HepG2 (cell line): ENCODE measurements at regions of chr7 and their contacts with region 1.

Region 1: GRCh38 chr7:122886357-122887081 is at the start of gene CADPS2:
- DNase-seq: peak; percentile 86
- ATAC-seq: peak; percentile 85
- H3K4me3 ChIP-seq: peak within 1 kb of the TSS; percentile 81 to 98 (median 92)
- H3K27ac ChIP-seq: peak within 1 kb of the TSS; percentile 89
- H3K4me1 ChIP-seq: peaks cover 46% of the 10 kb centered on the region
- H3K27me3 ChIP-seq: no peaks in the 10 kb centered on the region; a peak in 1 of 5 replicates
- CTCF ChIP-seq: no peak; the same call in 1 of the 2 replicates
- EP300 ChIP-seq: no peak
- POLR2A ChIP-seq: peak; percentile 49 to 69
- RAD21 ChIP-seq: peak; percentile 35
- total RNA-seq, gene CADPS2: 43.8 and 62.9 TPM in 2 replicates

Region 2: DNA sequence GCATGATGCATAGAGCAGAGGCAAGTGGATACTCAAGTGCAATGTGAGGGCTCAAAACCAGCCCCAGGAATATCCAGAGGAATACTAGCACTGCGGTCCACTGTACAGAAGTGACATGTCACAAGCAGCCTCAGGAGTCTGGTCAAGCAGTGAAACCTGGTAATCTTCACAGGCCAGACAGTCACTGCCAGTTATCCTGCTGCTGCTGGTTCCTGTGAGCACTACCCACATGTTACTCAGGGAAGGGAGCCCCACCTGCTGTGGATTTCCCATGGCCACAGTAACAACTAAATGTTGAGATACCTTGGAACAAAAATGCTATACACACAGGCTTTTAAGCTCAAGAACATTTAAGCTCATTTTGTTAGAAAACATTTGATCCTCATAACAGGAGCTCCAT is 290.6 kb before region 1 on chr7:
- CTCF ChIA-PET with region 1: no interaction called
- POLR2A ChIA-PET with region 1: no interaction called
- in situ Hi-C with region 1: no loop called
- intact Hi-C with region 1: no loop called
- DNase-seq: no peak
- ATAC-seq: no peak
- H3K4me3 ChIP-seq: no peak overlapping the region
- H3K27ac ChIP-seq: no peak overlapping the region
- H3K4me1 ChIP-seq: peaks cover 10% of the 10 kb centered on the region
- H3K27me3 ChIP-seq: no peaks in the 10 kb centered on the region
- CTCF ChIP-seq: no peak
- EP300 ChIP-seq: no peak
- POLR2A ChIP-seq: no peak
- RAD21 ChIP-seq: no peak

Region 3: GRCh38 chr7:122679813-122680212 is 206.7 kb before region 1 on chr7:
- CTCF ChIA-PET with region 1: no interaction called
- POLR2A ChIA-PET with region 1: interaction called, 5 read pairs
- in situ Hi-C with region 1: no loop called
- intact Hi-C with region 1: loop called (anchors 1 kb)
- DNase-seq: no peak
- ATAC-seq: peak; percentile 79
- H3K4me3 ChIP-seq: peak overlapping the region; percentile 23 to 50 (median 24); a peak in 4 of 6 replicates
- H3K27ac ChIP-seq: peak overlapping the region; percentile 95
- H3K4me1 ChIP-seq: peaks cover 49% of the 10 kb centered on the region
- H3K27me3 ChIP-seq: no peaks in the 10 kb centered on the region
- CTCF ChIP-seq: no peak
- EP300 ChIP-seq: no peak
- POLR2A ChIP-seq: no peak
- RAD21 ChIP-seq: no peak

Region 4: DNA sequence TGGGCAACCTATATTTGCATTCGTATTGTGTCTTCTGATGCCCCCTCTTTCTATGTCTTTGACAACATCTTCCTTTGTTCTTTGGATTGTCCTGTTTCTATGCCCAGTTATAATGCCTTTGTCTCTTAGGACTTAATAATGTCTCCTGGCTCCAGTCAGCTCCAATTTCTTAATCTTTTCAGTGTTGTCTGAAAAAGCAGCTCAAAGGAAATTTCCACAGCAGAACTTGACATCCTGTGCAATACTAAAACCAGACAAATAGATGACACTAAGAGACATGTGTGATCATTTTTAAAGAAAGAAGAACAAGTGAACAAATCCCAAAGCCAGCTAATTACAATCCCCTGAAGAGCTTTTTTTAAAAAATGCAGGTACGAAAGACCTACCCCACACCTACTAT is 136.1 kb before region 1 on chr7:
- CTCF ChIA-PET with region 1: no interaction called
- POLR2A ChIA-PET with region 1: no interaction called
- in situ Hi-C with region 1: no loop called
- intact Hi-C with region 1: loop called (anchors 5 kb)
- DNase-seq: no peak
- ATAC-seq: no peak
- H3K4me3 ChIP-seq: no peak overlapping the region
- H3K27ac ChIP-seq: no peak overlapping the region
- H3K4me1 ChIP-seq: peaks cover 41% of the 10 kb centered on the region
- H3K27me3 ChIP-seq: no peaks in the 10 kb centered on the region
- CTCF ChIP-seq: no peak
- EP300 ChIP-seq: no peak
- POLR2A ChIP-seq: no peak
- RAD21 ChIP-seq: no peak

Region 5: GRCh38 chr7:122847871-122848473 is 38.5 kb before region 1 on chr7:
- CTCF ChIA-PET with region 1: no interaction called
- POLR2A ChIA-PET with region 1: interaction called, 7 read pairs
- in situ Hi-C with region 1: no loop called
- intact Hi-C with region 1: loop called (anchors 2 kb)
- DNase-seq: no peak
- ATAC-seq: no peak
- H3K4me3 ChIP-seq: no peak overlapping the region
- H3K27ac ChIP-seq: peak overlapping the region; percentile 32
- H3K4me1 ChIP-seq: peaks cover 57% of the 10 kb centered on the region
- H3K27me3 ChIP-seq: no peaks in the 10 kb centered on the region
- CTCF ChIP-seq: no peak
- EP300 ChIP-seq: no peak
- POLR2A ChIP-seq: no peak
- RAD21 ChIP-seq: no peak

Region 6: DNA sequence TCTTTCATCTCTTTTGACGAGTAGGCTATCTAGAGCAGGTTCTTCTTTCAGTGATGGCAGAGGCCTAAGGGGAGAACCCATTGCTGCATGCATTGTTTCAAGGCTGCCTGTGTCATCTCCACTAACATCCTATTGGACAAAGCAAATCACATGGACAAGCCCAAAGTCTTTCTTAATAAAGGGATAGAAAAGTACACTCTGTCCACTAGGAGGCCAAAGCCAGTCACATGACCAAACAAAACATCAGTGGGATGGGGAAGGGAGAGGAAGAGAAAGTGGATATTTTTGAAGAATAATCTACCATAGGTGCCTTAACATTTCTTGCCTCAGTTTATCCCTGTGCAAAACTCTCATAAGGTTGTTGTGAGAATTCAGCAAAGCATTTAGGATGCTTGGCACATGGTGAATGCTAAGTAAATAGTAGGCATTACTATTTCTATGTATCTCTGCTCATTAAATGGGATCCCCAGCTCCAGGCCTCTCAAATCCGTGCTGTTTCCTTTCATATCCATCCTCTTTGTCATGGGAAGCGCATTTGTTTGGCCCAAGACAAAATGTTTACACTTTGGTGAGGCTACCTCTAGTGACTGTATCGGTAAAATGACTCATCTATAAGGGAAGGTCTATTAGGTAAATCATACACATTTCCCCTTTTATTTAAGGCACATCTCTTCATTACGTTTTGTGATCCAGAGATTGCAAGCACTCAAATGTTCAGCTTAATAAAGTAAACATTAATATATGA is 16.4 kb after region 1 on chr7:
- CTCF ChIA-PET with region 1: no interaction called
- POLR2A ChIA-PET with region 1: no interaction called
- in situ Hi-C with region 1: no loop called
- intact Hi-C with region 1: no loop called
- DNase-seq: peak; percentile 21
- ATAC-seq: peak; percentile 76
- H3K4me3 ChIP-seq: no peak overlapping the region
- H3K27ac ChIP-seq: no peak overlapping the region
- H3K4me1 ChIP-seq: no peaks in the 10 kb centered on the region
- H3K27me3 ChIP-seq: no peaks in the 10 kb centered on the region
- CTCF ChIP-seq: no peak
- EP300 ChIP-seq: no peak
- POLR2A ChIP-seq: no peak
- RAD21 ChIP-seq: no peak

Region 7: DNA sequence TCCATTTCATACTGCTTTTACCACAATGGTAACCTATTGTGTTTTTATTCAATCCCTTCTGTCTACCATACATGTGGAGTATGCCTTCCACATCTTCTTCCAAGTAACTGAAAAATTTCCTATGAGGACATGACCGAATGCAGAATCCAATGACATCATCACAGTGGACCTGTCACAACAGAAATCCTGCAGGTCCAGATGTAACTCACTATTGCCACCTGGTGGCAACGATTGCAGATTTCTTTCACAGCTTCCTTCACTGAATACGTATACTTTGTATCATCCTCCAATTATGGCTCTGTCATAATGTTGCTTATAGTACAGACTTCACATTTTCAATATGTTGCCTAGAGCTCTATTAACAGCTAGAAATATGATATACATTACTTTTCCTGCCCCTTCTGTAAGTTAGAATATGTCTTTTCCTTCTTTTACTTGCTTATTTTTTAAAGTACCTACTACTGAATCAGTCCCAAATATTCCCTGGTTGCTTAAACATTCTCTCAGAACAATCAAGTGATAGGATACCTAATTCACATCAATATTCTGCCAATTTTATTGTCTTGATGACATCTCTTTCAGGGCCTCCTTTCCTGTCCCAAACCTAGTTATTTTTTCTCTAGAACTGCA is 267.8 kb after region 1 on chr7:
- CTCF ChIA-PET with region 1: no interaction called
- POLR2A ChIA-PET with region 1: no interaction called
- in situ Hi-C with region 1: no loop called
- intact Hi-C with region 1: loop called (anchors 1 kb)
- DNase-seq: peak; percentile 74
- ATAC-seq: peak; percentile 93
- H3K4me3 ChIP-seq: no peak overlapping the region
- H3K27ac ChIP-seq: no peak overlapping the region
- H3K4me1 ChIP-seq: no peaks in the 10 kb centered on the region
- H3K27me3 ChIP-seq: no peaks in the 10 kb centered on the region
- CTCF ChIP-seq: peak; percentile 85
- EP300 ChIP-seq: no peak
- POLR2A ChIP-seq: no peak
- RAD21 ChIP-seq: peak; percentile 38; the same call in 1 of the 2 replicates